ENCODE measurements at regions of chr13 and their contacts with region 1.

Region 1: GRCh38 chr13:105007166-105007808 is 1528.2 kb downstream of the EFNB2 start:
- DNase-seq: no peak
- H3K4me3 Mint-ChIP-seq: no peak overlapping the region
- H3K27ac Mint-ChIP-seq: no peak overlapping the region
- H3K4me1 Mint-ChIP-seq: no peaks in the 10 kb centered on the region
- H3K27me3 Mint-ChIP-seq: no peaks in the 10 kb centered on the region

Region 2: GRCh38 chr13:104975272-104975671 is 32.0 kb before region 1 on chr13:
- intact Hi-C with region 1: loop called (anchors 2 kb)
- DNase-seq: no peak
- H3K4me3 Mint-ChIP-seq: no peak overlapping the region
- H3K27ac Mint-ChIP-seq: no peak overlapping the region
- H3K4me1 Mint-ChIP-seq: no peaks in the 10 kb centered on the region
- H3K27me3 Mint-ChIP-seq: no peaks in the 10 kb centered on the region

Region 3: GRCh38 chr13:105139380-105140285 is 132.3 kb after region 1 on chr13:
- intact Hi-C with region 1: no loop called
- DNase-seq: peak; percentile 59
- H3K4me3 Mint-ChIP-seq: peak overlapping the region; percentile 88
- H3K27ac Mint-ChIP-seq: peak overlapping the region; percentile 96
- H3K4me1 Mint-ChIP-seq: peaks cover 20% of the 10 kb centered on the region
- H3K27me3 Mint-ChIP-seq: peaks cover 4% of the 10 kb centered on the region

Measured in activated T-helper 1 cell treated with anti-CD3 and anti-CD28 coated beads, Interleukin-12 subunit alpha, Interleukin-12 subunit beta, Interleukin-2, Interleukin-4 antibody, amounts not matched to agents 30 ng/mL and 10 ng/mL and 1 ng/mL, durations not matched to agents 14 hours and 24 hours and 36 hours (primary cell).